H1 (cell line): ENCODE measurements at regions of chr2 and their contacts with region 1.

Region 1: DNA sequence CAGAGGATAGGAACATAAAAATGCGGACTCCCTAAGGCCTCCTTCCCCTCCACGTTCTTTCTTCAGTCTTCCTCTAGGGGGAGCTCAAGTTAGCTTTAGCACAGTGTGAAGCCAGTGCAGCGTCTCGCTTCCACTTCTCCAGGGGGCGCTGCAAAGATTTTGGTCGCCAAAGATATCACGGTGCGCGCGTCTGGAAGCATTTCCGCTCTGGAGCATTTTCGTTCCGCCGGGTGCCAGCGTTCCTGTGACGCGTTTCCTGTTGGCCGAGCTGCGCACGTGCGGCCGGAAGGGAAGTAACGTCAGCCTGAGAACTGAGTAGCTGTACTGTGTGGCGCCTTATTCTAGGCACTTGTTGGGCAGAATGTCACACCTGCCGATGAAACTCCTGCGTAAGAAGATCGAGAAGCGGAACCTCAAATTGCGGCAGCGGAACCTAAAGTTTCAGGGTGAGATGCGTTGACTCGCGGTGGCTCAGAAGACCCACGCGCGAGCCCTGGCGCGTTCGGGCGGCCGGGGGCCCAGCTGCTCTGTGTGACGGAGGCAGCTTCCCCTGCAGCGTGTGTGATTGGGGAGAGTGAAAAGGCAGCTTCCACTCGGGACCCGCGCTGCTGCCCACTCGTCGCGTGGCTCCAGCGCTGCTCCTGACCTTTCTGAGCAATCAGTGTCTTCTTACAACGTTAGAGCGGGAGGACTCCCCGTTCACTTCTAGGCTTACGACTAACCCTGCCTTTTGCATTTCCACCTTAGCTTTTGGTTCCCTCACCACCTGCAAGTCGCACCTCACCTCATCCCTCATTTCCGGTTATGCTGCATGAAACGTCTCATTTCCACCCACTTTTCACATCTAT is at the start of gene DDX18:
- DNase-seq: peak; percentile 89 to 94
- H3K4me3 ChIP-seq: peak within 1 kb of the TSS; percentile 85 to 99 (median 94)
- H3K27ac ChIP-seq: peak within 1 kb of the TSS; percentile 72
- H3K4me1 ChIP-seq: peaks cover 0 to 8% (median 5%) of the 10 kb centered on the region in 4 experiments; a peak in 3 of 7 replicates
- H3K27me3 ChIP-seq: no peaks in the 10 kb centered on the region
- CTCF ChIP-seq: peak; percentile 82 to 100 (median 100)
- EP300 ChIP-seq: peak in 1 of 2 experiments; percentile 81; a peak in 1 of 3 replicates
- POLR2A ChIP-seq: peak; percentile 33 to 80
- RAD21 ChIP-seq: peak; percentile 53 to 66; a peak in 3 of 4 replicates
- total RNA-seq, gene DDX18: 111 and 119 TPM in 2 replicates

Region 2: DNA sequence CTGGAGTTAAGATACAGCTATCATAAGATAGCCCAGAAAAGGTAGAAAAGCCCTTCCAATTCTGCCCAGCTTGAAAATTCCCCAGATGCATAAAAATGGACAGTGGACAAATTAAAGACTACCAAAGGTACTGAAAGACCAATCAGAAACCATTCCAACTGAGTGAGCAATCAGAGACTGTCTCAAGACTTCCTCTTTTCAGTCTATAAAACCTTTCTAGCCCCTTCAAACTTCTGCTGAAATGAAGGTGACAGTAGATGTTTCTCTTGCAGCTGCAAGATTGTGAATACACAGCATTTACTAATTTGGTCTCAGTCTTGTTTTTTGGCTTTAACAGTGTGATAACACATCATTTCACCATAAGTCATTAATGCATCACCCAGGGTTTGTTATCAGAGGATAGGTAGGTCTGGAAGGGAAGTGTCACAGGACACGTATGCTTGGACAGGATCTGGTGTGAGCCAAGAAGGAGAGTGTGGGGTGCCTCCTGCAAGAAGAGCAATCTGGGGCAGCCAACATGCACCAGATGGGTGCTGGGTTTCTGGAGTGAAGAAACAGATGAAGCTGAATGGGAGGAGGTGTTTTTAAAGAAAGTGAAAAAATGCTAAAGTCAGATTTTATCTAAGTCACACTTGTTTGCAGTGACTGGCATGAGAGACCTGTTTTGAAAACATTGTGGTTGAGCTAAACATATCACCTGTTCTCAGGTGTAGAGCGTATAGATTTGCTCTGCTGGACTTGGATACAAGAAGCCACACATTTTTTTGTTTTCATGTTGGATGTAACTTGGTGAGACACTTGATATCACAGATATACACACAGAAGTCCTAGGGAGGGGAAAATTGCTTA is 75.4 kb before region 1 on chr2:
- CTCF ChIA-PET with region 1: no interaction called
- POLR2A ChIA-PET with region 1: no interaction called
- DNase-seq: no peak
- H3K4me3 ChIP-seq: no peak overlapping the region
- H3K27ac ChIP-seq: no peak overlapping the region
- H3K4me1 ChIP-seq: no peaks in the 10 kb centered on the region
- H3K27me3 ChIP-seq: no peaks in the 10 kb centered on the region
- CTCF ChIP-seq: no peak
- EP300 ChIP-seq: no peak
- POLR2A ChIP-seq: no peak
- RAD21 ChIP-seq: no peak

Region 3: GRCh38 chr2:117801826-117802225 is 12.8 kb before region 1 on chr2:
- CTCF ChIA-PET with region 1: interaction called, 29 read pairs
- POLR2A ChIA-PET with region 1: interaction called, 6 read pairs
- DNase-seq: no peak
- H3K4me3 ChIP-seq: no peak overlapping the region
- H3K27ac ChIP-seq: no peak overlapping the region
- H3K4me1 ChIP-seq: no peaks in the 10 kb centered on the region
- H3K27me3 ChIP-seq: no peaks in the 10 kb centered on the region; a peak in 1 of 7 replicates
- CTCF ChIP-seq: no peak
- EP300 ChIP-seq: no peak
- POLR2A ChIP-seq: no peak
- RAD21 ChIP-seq: no peak